Mammary epithelial cell (primary cell): ENCODE measurements at regions of chr17 and their contacts with region 1.

Region 1: DNA sequence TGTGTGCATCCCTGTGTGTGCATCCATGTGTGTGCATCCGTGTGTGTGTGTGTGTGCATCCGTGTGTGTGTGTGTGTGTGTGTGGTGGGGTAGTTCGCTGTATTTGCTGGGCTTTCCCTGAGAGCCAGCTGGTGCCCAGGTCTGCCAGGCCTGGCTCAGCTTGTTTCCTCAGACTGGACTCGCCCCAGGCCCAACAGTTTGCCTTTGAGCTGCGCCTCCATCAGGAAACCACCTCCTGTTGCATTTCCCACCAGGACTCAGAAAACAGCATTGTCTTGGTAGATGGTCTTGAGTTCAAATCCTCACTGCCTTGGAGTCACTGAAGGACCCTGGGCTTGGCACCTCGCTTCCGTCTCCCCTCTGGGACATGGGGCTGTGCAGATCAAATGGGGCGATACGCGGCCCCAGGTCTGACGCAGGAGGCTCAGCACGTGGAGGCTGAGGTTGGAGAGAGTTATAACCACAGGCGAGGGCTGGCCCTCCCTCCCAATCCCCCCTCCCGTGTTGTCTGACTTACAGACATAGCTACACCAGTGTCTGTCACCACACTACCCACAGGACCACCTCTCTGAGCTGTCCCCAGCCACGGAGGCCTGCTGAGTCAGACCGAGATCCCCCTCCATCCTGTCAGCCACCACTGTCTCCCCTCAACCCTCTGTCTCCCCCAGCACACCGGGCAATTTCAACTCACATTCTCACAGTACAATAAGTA is 4.7 kb downstream of the ITGAE start:
- DNase-seq: no peak
- H3K4me3 ChIP-seq: no peak overlapping the region
- H3K27ac ChIP-seq: no peak overlapping the region
- H3K4me1 ChIP-seq: peaks cover 17% of the 10 kb centered on the region
- H3K27me3 ChIP-seq: no peaks in the 10 kb centered on the region
- CTCF ChIP-seq: no peak

Region 2: DNA sequence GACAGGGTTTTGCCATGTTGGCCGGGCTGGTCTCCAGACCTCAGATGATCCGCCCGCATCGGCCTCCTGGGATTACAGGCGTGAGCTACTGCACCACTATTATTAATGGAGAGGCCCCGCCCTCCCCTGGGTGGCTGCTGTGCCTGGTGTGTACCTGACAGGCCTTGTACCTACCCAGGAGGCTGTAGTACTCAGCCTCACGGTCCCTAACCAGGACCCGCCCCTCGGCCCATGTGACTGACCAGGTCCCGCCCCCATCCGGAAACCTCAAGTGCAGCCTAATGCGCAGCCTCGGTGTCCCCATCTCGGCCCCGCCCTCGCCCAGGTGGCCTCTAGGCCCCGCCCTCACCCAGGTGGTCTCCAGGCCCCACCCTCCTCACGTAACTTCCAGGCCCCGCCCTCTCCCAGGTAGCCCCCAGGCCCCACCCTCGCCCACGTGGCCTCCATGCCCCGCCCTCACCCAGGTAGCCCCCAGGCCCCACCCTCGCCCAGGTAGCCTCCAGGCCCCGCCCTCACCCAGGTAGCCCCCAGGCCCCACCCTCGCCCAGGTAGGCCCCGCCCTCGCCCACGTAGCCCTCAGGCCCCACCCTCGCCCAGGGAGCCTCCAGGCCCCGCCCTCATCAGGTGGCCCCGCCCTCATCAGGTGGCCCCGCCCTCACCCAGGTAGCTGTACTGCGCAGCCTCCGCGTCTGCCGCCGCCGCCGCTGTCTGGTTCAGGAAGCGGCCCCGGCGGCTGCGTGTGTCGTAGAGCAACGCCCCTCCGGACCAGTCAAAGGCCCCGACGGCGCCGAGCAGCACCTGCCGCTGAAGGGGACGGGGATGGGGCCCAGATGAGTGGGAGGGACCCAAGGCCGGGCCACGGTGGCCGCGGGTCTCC is 41.6 kb before region 1 on chr17:
- CTCF ChIA-PET with region 1: interaction called, 16 read pairs
- dilution Hi-C with region 1: no loop called
- in situ Hi-C with region 1: no loop called
- intact Hi-C with region 1: no loop called
- DNase-seq: peak; percentile 96
- H3K4me3 ChIP-seq: peak overlapping the region; percentile 61 to 89 (median 80)
- H3K27ac ChIP-seq: peak overlapping the region; percentile 15
- H3K4me1 ChIP-seq: peaks cover 9% of the 10 kb centered on the region
- H3K27me3 ChIP-seq: no peaks in the 10 kb centered on the region
- CTCF ChIP-seq: no peak